Aorta (tissue), 5 donors: ENCODE measurements at regions of chr3 and their contacts with region 1.

Region 1: DNA sequence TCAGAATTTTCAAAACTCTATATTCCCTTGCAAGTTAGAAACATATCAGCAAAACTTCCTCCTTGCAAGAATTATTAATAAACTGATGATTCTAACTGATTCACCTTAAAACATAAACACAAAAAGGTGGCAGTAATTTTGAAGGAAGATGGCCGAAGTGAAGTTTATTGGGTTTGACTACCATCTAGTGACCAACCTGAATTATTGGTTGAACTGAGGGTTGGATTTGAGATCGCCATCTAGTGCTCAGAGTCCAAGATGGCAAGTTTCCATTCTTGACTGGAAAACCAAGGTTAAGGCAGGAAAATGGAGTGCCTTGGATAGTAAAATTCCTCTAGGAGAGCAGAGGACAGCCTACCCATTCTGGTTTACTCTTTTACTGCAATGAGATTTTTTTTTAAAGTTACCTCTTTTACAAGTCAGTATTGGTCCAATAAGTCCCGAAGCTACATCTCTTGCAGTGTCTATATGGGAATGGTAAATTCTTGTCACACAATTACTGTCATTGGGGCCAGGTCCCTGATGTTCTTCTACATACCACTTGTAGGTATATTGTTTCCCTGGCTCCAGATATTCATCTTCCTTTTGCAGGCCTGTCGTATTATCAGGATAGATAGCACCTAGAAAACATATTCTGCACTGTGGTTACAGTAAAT is 51.6 kb upstream of the CP start:
- DNase-seq: no peak
- ATAC-seq: peak; percentile 92
- H3K4me3 ChIP-seq: no peak overlapping the region
- H3K27ac ChIP-seq: no peak overlapping the region
- H3K4me1 ChIP-seq: no peaks in the 10 kb centered on the region
- H3K27me3 ChIP-seq: no peaks in the 10 kb centered on the region

Region 2: GRCh38 chr3:148861277-148861869 is 411.9 kb before region 1 on chr3:
- intact Hi-C with region 1: loop called in 1 of 2 experiments (anchors 5 kb)
- DNase-seq: no peak
- ATAC-seq: no peak
- H3K4me3 ChIP-seq: no peak overlapping the region
- H3K27ac ChIP-seq: no peak overlapping the region
- H3K4me1 ChIP-seq: no peaks in the 10 kb centered on the region
- H3K27me3 ChIP-seq: no peaks in the 10 kb centered on the region

Region 3: DNA sequence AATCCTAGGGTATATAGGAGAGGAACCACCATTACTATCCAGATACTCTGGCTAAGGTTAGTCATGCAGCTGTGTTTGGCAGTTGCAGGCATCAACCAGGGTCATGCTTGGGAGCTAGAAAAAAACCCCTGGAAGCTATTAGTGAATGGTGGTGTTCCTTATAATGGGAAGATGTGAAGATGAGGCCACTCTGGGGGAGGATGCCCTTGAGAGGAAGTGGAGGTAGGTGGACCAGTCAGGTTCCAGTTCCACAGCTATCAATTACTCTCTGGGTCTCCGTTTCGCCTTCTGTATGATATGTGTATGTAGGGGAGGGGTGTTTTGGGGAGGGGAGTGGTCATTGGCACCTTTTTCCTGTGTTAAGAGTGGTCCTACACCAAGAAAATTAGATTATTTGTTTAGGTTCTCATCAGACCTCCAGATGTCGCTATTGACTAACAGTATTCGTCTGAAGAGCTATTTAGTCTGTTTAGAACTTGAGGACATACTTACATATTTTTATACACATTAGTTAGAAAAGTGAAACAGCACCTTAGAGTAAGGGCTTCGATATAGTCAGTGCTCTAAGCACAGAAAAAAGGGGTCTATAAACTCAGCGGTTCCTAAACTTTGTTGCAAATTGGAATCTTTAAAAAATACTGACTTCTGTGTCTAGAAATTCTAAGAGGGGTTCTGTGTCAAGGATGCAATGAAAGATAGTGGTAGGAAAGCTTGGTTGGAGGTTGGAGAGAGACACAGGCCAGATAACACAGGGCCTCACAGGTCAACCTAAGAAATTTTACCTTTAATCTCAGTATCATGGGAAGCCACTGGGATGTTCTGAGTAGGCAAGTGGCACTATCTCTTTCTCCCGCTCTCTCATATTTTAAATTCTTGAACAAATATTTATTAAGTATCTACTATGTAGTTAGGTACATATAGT is 152.9 kb before region 1 on chr3:
- intact Hi-C with region 1: loop called (anchors 2 kb)
- DNase-seq: no peak
- ATAC-seq: peak; percentile 75
- H3K4me3 ChIP-seq: no peak overlapping the region
- H3K27ac ChIP-seq: no peak overlapping the region
- H3K4me1 ChIP-seq: peaks cover 0 to under 1% of the 10 kb centered on the region in 2 donors
- H3K27me3 ChIP-seq: no peaks in the 10 kb centered on the region